CD4-positive, alpha-beta memory T cell (primary cell): ENCODE measurements at regions of chr16 and their contacts with region 1.

Region 1: GRCh38 chr16:31142109-31143010 is 6.8 kb upstream of the PRSS8 start:
- DNase-seq: peak; percentile 94 to 97 (median 96)
- H3K4me3 ChIP-seq: peak overlapping the region in 1 of 2 donors; percentile 75
- H3K4me3 Mint-ChIP-seq: peak overlapping the region; percentile 63 to 80 (median 74)
- H3K27ac ChIP-seq: peak overlapping the region; percentile 42
- H3K27ac Mint-ChIP-seq: peak overlapping the region; percentile 72 to 94 (median 91)
- H3K4me1 ChIP-seq: peaks cover 15% of the 10 kb centered on the region
- H3K4me1 Mint-ChIP-seq: peaks cover 3 to 14% (median 10%) of the 10 kb centered on the region in 4 donors
- H3K27me3 ChIP-seq: no peaks in the 10 kb centered on the region
- H3K27me3 Mint-ChIP-seq: no peaks in the 10 kb centered on the region

Region 2: DNA sequence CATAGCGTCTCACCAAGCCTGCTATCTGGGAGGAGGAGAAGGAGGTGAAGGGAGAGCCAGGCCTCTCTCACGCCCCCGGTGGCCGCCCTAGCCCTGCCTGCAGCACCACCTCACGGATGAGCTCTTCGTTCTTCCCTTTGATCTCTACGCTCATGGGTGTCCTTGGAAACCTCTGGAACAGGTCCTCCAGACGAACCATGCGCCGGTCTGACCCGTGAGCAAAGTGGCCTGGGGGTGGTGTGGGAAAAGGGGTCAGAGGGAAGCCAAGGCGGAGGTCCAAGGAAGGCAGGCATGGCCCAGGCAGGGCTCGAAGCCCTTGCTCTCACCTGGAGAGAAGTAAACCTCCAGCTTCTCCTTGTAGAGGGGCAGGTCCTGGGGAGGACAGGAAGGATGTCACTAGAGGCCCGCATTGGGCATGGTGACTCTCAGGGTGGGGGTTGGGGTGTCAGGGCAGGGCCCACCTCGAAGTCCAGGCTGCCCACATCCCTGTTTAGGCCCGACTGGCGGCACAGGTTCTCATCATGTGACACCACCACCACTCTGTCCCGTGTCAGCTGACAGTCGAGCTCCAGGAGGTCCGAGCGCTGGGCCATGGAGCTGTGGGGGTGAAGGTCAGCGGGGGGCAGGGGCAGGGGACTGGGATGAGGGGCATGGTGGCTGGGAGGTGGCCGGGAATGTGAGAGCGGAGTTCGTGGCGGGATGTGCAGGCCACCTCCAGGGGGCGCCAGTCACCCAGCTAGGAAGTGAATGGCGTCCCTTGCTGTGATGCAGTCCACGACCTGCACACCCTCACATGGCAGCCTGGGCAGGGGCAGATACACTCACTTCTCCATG is 1029.9 kb before region 1 on chr16:
- CTCF ChIA-PET with region 1: no interaction called
- POLR2A ChIA-PET with region 1: no interaction called
- intact Hi-C with region 1: no loop called
- DNase-seq: peak in 2 of 5 donors; percentile 35 to 45
- H3K4me3 ChIP-seq: no peak overlapping the region
- H3K4me3 Mint-ChIP-seq: peak overlapping the region in 1 of 8 donors; percentile 10
- H3K27ac ChIP-seq: no peak overlapping the region
- H3K27ac Mint-ChIP-seq: peak overlapping the region in 2 of 7 donors; percentile 35 to 66
- H3K4me1 ChIP-seq: peaks cover 27% of the 10 kb centered on the region
- H3K4me1 Mint-ChIP-seq: peaks cover 11 to 25% (median 17%) of the 10 kb centered on the region in 4 donors
- H3K27me3 ChIP-seq: no peaks in the 10 kb centered on the region
- H3K27me3 Mint-ChIP-seq: no peaks in the 10 kb centered on the region

Region 3: DNA sequence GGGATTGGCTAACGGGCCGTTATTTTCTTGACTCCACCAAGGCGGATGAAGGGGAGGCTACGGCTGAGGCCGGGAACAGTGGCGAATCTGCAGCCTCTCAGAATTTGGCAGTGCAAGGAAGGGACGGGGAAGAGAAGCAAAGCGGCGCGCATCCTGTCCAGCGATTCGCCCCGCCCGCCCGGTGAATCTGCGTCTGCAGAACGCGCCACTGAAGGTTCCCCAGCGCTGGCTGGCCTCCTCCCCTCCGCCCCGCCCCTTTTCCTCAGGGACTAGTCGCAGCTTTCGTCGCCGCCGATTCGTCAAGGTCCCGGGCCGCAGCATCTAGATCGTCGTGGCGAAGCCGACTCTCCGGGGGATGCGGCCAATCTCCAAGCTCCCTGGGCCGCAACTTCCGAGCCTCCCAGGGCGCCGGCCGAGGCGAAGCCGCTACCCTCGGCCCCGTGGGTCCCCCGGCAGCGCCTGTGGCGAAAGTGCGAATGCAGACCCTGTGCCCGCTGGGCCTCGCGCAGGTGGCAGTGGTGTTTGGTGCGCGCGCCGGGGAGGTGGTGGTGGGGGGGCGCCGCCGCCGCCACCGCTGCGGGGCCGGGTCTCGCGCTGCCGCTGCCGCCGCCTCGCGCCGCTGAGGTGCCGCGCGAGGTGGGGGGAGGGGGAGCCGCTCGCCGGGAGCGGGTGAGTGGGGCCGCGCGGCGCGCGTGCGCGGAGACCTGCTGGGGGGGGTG is 184.7 kb before region 1 on chr16 and contains the start of gene SETD1A:
- CTCF ChIA-PET with region 1: interaction called, 13 read pairs
- POLR2A ChIA-PET with region 1: interaction called, 9 read pairs
- intact Hi-C with region 1: loop called (anchors 1 kb)
- DNase-seq: peak; percentile 97 to 98 (median 98)
- H3K4me3 ChIP-seq: peak within 1 kb of the TSS; percentile 85 to 95
- H3K4me3 Mint-ChIP-seq: peak within 1 kb of the TSS; percentile 95 to 99 (median 96)
- H3K27ac ChIP-seq: peak within 1 kb of the TSS; percentile 92
- H3K27ac Mint-ChIP-seq: peak within 1 kb of the TSS; percentile 98 to 100 (median 99)
- H3K4me1 ChIP-seq: peaks cover 30% of the 10 kb centered on the region
- H3K4me1 Mint-ChIP-seq: peaks cover 13 to 43% (median 31%) of the 10 kb centered on the region in 4 donors
- H3K27me3 ChIP-seq: no peaks in the 10 kb centered on the region
- H3K27me3 Mint-ChIP-seq: peaks cover 0 to 4% of the 10 kb centered on the region in 2 donors
- total RNA-seq, gene SETD1A: 32.1 to 33.2 TPM

Region 4: GRCh38 chr16:31032736-31033708 is 109.3 kb before region 1 on chr16 and contains the start of gene STX4:
- CTCF ChIA-PET with region 1: no interaction called
- POLR2A ChIA-PET with region 1: interaction called, 6 read pairs
- intact Hi-C with region 1: loop called (anchors 1 kb)
- DNase-seq: peak; percentile 95 to 100 (median 98)
- H3K4me3 ChIP-seq: peak within 1 kb of the TSS; percentile 83 to 97
- H3K4me3 Mint-ChIP-seq: peak within 1 kb of the TSS; percentile 91 to 98 (median 95)
- H3K27ac ChIP-seq: peak within 1 kb of the TSS; percentile 86
- H3K27ac Mint-ChIP-seq: peak within 1 kb of the TSS; percentile 93 to 98 (median 98)
- H3K4me1 ChIP-seq: peaks cover 24% of the 10 kb centered on the region
- H3K4me1 Mint-ChIP-seq: peaks cover 6 to 38% (median 22%) of the 10 kb centered on the region in 4 donors
- H3K27me3 ChIP-seq: no peaks in the 10 kb centered on the region
- H3K27me3 Mint-ChIP-seq: no peaks in the 10 kb centered on the region
- total RNA-seq, gene STX4: 106 to 111 TPM

Region 5: GRCh38 chr16:31108035-31108793 is 34.1 kb before region 1 on chr16 and contains the start of gene BCKDK:
- CTCF ChIA-PET with region 1: interaction called, 10 read pairs
- POLR2A ChIA-PET with region 1: interaction called, 3 read pairs
- intact Hi-C with region 1: loop called (anchors 2 kb)
- DNase-seq: peak; percentile 43 to 52 (median 44)
- H3K4me3 ChIP-seq: peak within 1 kb of the TSS; percentile 14 to 83
- H3K4me3 Mint-ChIP-seq: peak within 1 kb of the TSS; percentile 83 to 90 (median 87)
- H3K27ac ChIP-seq: peak within 1 kb of the TSS; percentile 75
- H3K27ac Mint-ChIP-seq: peak within 1 kb of the TSS; percentile 79 to 94 (median 85)
- H3K4me1 ChIP-seq: peaks cover 20% of the 10 kb centered on the region
- H3K4me1 Mint-ChIP-seq: peaks cover 8 to 23% (median 15%) of the 10 kb centered on the region in 4 donors
- H3K27me3 ChIP-seq: no peaks in the 10 kb centered on the region
- H3K27me3 Mint-ChIP-seq: no peaks in the 10 kb centered on the region
- total RNA-seq, gene BCKDK: 17.0 to 21.1 TPM

Region 6: DNA sequence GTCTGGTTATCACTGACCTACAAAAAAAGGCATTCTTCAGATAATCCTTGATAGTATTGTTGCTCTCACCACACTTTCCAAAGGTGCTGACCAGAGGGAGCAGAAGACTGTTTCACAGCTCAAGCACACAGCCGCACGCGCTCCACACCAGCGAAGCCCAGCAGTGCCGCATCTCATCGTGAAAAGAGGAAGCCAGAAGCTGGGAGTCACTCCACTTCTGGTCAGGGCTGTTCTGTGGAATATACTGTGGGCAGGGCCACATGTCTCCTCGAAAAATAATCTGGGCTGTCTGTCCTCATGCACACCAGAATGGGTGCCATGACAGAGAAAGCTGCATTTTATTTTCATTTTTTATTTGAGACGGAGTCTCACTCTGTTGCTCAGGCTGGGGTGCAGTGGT is 14.8 kb after region 1 on chr16:
- CTCF ChIA-PET with region 1: interaction called, 35 read pairs
- POLR2A ChIA-PET with region 1: interaction called, 8 read pairs
- intact Hi-C with region 1: no loop called
- DNase-seq: no peak
- H3K4me3 ChIP-seq: no peak overlapping the region
- H3K4me3 Mint-ChIP-seq: peak overlapping the region in 2 of 8 donors; percentile 8 to 43
- H3K27ac ChIP-seq: no peak overlapping the region
- H3K27ac Mint-ChIP-seq: peak overlapping the region in 2 of 7 donors; percentile 31 to 55
- H3K4me1 ChIP-seq: no peaks in the 10 kb centered on the region
- H3K4me1 Mint-ChIP-seq: peaks cover 0 to 8% (median 3%) of the 10 kb centered on the region in 4 donors
- H3K27me3 ChIP-seq: no peaks in the 10 kb centered on the region
- H3K27me3 Mint-ChIP-seq: peaks cover 0 to 2% of the 10 kb centered on the region in 2 donors

Region 7: DNA sequence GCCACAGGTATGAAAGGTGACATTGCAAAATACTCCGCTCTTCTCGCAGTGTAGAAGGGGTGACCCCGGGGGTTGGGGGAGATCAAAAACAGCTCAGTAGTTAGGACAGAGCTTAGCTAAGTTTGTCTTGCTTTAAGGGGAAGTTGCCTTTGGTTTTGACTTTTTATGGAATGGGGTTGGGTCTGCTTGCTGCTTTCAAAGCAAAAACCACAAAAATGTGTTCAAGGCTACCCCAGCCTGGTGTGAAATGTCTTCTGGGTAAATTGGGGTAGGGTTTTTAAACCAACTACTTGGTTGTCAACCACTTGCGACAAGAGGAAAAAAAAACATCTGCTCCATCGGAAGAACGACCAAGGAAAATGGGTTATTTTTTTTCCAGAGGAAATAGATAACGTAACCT is 43.8 kb after region 1 on chr16:
- CTCF ChIA-PET with region 1: interaction called, 3 read pairs
- POLR2A ChIA-PET with region 1: interaction called, 10 read pairs
- intact Hi-C with region 1: no loop called
- DNase-seq: no peak
- H3K4me3 ChIP-seq: no peak overlapping the region
- H3K4me3 Mint-ChIP-seq: peak overlapping the region in 7 of 8 donors; percentile 1 to 68 (median 27)
- H3K27ac ChIP-seq: no peak overlapping the region
- H3K27ac Mint-ChIP-seq: peak overlapping the region in 5 of 7 donors; percentile 6 to 99 (median 54)
- H3K4me1 ChIP-seq: peaks cover 66% of the 10 kb centered on the region
- H3K4me1 Mint-ChIP-seq: peaks cover 60 to 97% (median 78%) of the 10 kb centered on the region in 4 donors
- H3K27me3 ChIP-seq: no peaks in the 10 kb centered on the region
- H3K27me3 Mint-ChIP-seq: no peaks in the 10 kb centered on the region

Region 8: DNA sequence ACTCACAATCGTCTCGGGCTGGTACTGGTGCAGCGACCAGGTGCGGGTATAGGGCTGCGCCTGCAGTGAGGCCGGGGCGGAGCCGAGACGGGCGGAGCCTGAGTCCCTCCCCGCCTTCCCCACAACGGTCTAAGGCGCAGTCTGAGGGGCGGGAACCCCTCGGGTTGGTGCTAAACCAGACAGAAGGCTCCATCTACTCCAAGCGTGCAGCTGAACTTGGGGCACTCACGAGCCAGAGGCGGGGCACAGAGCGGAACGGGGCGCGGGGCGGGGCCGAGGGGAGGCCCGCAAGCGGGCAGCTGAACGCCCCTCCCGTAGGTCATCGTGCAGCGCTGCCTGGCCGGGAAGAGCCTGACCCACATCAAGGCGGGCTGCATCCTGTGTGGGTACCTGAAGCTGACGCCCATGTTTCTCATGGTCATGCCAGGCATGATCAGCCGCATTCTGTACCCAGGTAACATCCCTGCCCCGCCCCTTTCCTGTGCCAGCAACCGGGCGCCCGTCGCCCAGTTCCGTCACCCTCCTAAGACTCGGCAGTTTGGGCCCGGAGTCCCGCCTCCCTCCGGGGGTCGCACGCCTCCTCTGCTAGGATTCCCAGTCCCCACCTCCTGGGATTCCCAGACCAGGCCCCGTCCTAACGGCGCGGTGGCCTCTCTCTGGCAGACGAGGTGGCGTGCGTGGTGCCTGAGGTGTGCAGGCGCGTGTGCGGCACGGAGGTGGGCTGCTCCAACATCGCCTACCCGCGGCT is 345.5 kb after region 1 on chr16:
- CTCF ChIA-PET with region 1: no interaction called
- POLR2A ChIA-PET with region 1: no interaction called
- intact Hi-C with region 1: no loop called
- DNase-seq: peak; percentile 77 to 90 (median 80)
- H3K4me3 ChIP-seq: peak overlapping the region; percentile 61 to 77
- H3K4me3 Mint-ChIP-seq: peak overlapping the region; percentile 89 to 95 (median 92)
- H3K27ac ChIP-seq: peak overlapping the region; percentile 39
- H3K27ac Mint-ChIP-seq: peak overlapping the region; percentile 71 to 94 (median 92)
- H3K4me1 ChIP-seq: peaks cover 13% of the 10 kb centered on the region
- H3K4me1 Mint-ChIP-seq: peaks cover 2 to 33% (median 16%) of the 10 kb centered on the region in 4 donors
- H3K27me3 ChIP-seq: no peaks in the 10 kb centered on the region
- H3K27me3 Mint-ChIP-seq: no peaks in the 10 kb centered on the region